HepG2 (cell line): ENCODE measurements at regions of chr12 and their contacts with region 1.

Region 1: GRCh38 chr12:69570545-69571399 is 14.5 kb upstream of the CCT2 start:
- DNase-seq: peak; percentile 54
- ATAC-seq: peak; percentile 70
- H3K4me3 ChIP-seq: no peak overlapping the region
- H3K27ac ChIP-seq: no peak overlapping the region
- H3K4me1 ChIP-seq: no peaks in the 10 kb centered on the region
- H3K27me3 ChIP-seq: no peaks in the 10 kb centered on the region
- CTCF ChIP-seq: peak; percentile 72
- EP300 ChIP-seq: no peak
- POLR2A ChIP-seq: no peak
- RAD21 ChIP-seq: no peak

Region 2: GRCh38 chr12:69290545-69291277 is 280.1 kb before region 1 on chr12:
- CTCF ChIA-PET with region 1: interaction called, 4 read pairs
- POLR2A ChIA-PET with region 1: interaction called, 3 read pairs
- in situ Hi-C with region 1: loop called (anchors 10 kb)
- intact Hi-C with region 1: loop called (anchors 2 kb)
- DNase-seq: peak; percentile 82
- ATAC-seq: peak; percentile 99
- H3K4me3 ChIP-seq: no peak overlapping the region
- H3K27ac ChIP-seq: no peak overlapping the region
- H3K4me1 ChIP-seq: peaks cover 11% of the 10 kb centered on the region
- H3K27me3 ChIP-seq: no peaks in the 10 kb centered on the region; a peak in 1 of 5 replicates
- CTCF ChIP-seq: peak; percentile 97
- EP300 ChIP-seq: no peak
- POLR2A ChIP-seq: no peak
- RAD21 ChIP-seq: peak; percentile 92

Region 3: GRCh38 chr12:69359531-69360347 is 211.0 kb before region 1 on chr12 and contains the start of gene YEATS4:
- CTCF ChIA-PET with region 1: interaction called, 17 read pairs
- POLR2A ChIA-PET with region 1: no interaction called
- in situ Hi-C with region 1: no loop called
- intact Hi-C with region 1: loop called (anchors 1 kb)
- DNase-seq: peak; percentile 95
- ATAC-seq: peak; percentile 90
- H3K4me3 ChIP-seq: peak within 1 kb of the TSS; percentile 71 to 75 (median 72)
- H3K27ac ChIP-seq: peak within 1 kb of the TSS; percentile 94
- H3K4me1 ChIP-seq: peaks cover 44% of the 10 kb centered on the region
- H3K27me3 ChIP-seq: no peaks in the 10 kb centered on the region
- CTCF ChIP-seq: no peak
- EP300 ChIP-seq: 0 out of 4 replicates have a peak, but pooled peaks of 1 of the 2 experiments have one; percentile 8
- POLR2A ChIP-seq: peak; percentile 76 to 86
- RAD21 ChIP-seq: peak; percentile 39; the same call in 1 of the 2 replicates
- total RNA-seq, gene YEATS4: 45.0 and 51.7 TPM in 2 replicates

Region 4: DNA sequence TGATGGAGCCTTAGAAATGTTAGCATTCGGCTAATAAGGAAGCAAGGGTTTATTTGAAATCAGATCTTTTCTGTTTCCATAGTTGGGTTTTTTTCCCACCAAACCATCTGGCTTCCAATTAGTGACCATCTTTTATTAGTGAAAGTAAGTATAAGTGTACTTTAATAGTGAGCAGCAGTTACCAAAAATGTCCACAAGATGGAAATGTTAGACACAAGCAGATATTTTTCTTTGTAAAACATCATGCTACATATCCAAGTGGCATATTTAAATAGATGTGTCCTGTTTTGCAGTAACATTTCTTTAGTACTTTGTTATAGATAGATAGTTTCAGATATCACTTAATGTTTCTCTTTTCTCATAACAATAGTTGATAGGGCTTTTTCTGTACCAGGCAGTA is 182.4 kb before region 1 on chr12:
- CTCF ChIA-PET with region 1: interaction called, 27 read pairs
- POLR2A ChIA-PET with region 1: no interaction called
- in situ Hi-C with region 1: loop called (anchors 10 kb)
- intact Hi-C with region 1: loop called (anchors 1 kb)
- DNase-seq: peak; percentile 43
- ATAC-seq: peak; percentile 48; the same call in 2 of the 3 replicates
- H3K4me3 ChIP-seq: no peak overlapping the region
- H3K27ac ChIP-seq: no peak overlapping the region
- H3K4me1 ChIP-seq: no peaks in the 10 kb centered on the region
- H3K27me3 ChIP-seq: no peaks in the 10 kb centered on the region
- CTCF ChIP-seq: peak; percentile 58
- EP300 ChIP-seq: no peak
- POLR2A ChIP-seq: no peak
- RAD21 ChIP-seq: 0 out of 2 replicates have a peak, but pooled peaks have one; percentile 27

Region 5: DNA sequence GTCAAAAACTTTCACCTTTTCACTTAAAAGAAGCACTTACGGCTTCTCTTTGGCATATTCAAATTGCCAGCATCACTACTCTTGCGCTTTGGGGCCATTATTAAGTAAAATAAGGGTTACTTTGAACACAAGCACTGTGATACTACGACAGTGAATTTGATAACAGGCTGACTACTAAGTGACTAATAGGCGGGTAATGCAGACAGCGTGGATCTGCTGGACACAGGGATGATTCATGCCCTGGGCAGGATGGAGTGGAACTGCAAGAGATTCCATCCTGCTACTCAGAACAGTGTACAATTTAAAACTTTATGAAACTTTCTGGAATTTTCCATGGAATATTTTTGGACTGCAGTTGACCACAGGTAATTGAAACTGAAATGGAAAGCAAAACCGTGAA is 165.3 kb before region 1 on chr12:
- CTCF ChIA-PET with region 1: no interaction called
- POLR2A ChIA-PET with region 1: no interaction called
- in situ Hi-C with region 1: no loop called
- intact Hi-C with region 1: no loop called
- DNase-seq: peak; percentile 47
- ATAC-seq: peak; percentile 49; the same call in 1 of the 3 replicates
- H3K4me3 ChIP-seq: no peak overlapping the region
- H3K27ac ChIP-seq: no peak overlapping the region
- H3K4me1 ChIP-seq: peaks cover 7% of the 10 kb centered on the region; the same call in 1 of the 2 replicates
- H3K27me3 ChIP-seq: no peaks in the 10 kb centered on the region
- CTCF ChIP-seq: no peak
- EP300 ChIP-seq: no peak
- POLR2A ChIP-seq: no peak
- RAD21 ChIP-seq: no peak

Region 6: DNA sequence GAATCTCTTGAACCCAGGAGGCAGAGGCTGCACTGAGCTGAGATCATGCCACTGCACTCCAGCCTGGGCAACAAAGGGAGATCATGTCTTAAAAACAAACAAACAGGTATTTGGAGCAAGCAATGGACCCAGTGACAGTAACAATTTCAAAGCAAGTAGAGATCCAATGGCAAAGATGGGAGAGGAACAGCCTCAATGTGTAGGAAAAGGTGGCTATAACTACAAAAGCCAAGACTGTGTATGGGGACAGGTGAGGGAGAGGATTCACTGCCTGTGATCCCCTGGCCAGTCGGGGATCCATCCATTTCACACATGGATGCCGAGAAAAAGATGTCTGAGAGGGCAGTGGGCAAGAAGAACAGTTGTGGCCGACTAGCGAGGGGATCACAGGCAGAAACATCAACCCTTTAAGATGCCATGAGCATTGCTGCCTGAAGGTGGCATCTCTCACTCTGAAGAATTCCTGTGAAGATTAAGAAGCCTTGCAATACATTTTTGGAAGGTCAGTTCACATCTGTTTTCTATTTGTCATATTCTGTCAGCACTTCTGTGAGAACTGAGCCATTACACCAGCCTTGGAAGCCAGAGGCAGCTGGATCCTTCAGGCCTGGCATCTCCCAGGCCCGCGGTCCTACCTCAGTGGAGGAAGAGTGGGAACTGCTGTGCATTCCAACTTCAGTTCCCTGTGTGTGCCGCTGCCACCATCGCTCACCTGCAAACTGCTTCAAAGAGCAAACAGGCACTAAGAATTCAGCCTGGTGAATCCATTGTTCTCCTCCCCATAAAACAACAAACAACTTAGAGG is 155.1 kb before region 1 on chr12:
- CTCF ChIA-PET with region 1: interaction called, 13 read pairs
- POLR2A ChIA-PET with region 1: interaction called, 4 read pairs
- in situ Hi-C with region 1: no loop called
- intact Hi-C with region 1: loop called (anchors 2 kb)
- DNase-seq: peak; percentile 68
- ATAC-seq: peak; percentile 81
- H3K4me3 ChIP-seq: peak overlapping the region; percentile 43 to 69 (median 48)
- H3K27ac ChIP-seq: peak overlapping the region; percentile 67
- H3K4me1 ChIP-seq: peaks cover 60% of the 10 kb centered on the region
- H3K27me3 ChIP-seq: no peaks in the 10 kb centered on the region
- CTCF ChIP-seq: peak; percentile 73
- EP300 ChIP-seq: no peak
- POLR2A ChIP-seq: 0 out of 4 replicates have a peak, but pooled peaks of 1 of the 2 experiments have one; percentile 10
- RAD21 ChIP-seq: peak; percentile 63

Region 7: DNA sequence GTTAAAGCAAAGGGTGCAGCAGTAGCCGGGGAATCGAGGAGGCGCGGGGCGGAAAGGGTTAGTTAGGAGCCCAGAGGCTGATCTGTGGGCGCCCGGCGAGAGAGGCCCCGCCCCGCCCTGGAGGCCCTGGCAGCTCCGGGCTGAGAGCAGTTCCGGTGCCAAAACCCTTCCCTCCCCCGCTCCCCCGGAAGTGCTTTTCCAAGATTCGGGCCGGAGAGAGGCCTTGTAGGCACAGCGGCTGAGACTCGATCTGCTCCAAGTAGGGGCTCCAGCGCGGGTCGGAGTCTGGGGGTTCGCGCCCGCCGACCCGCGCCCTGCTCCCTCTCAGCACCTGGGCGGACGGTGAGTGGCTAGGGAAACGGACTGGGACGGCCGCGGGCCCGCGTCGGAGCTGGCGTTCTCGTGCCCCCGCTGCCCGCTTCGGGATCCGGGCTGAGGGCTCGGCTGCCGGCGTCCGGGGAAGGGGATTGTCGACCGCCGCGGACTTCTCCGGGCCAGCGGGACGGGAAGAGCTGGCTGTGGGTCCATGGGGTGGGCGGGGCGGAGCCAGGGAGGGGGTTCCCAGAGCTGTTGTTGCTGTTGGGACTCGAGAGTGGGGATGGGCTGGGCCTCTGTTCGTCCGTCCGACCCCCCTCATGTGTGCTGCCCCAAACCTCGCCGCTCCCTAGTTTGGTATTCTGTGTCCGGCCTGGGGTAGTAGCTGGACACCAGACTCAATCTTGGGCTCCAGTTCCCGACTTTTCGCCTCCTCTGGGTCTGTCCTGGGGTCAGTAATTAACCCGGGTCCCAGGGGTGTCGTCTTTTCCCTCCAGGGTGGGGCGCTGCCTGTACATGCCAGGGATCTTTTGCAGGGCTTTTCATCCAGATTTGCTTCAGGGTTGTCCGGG is 100.3 kb before region 1 on chr12 and contains the start of gene FRS2:
- CTCF ChIA-PET with region 1: interaction called, 8 read pairs
- POLR2A ChIA-PET with region 1: no interaction called
- in situ Hi-C with region 1: loop called (anchors 5 kb)
- intact Hi-C with region 1: loop called (anchors 2 kb)
- DNase-seq: peak; percentile 86
- ATAC-seq: peak; percentile 98
- H3K4me3 ChIP-seq: peak within 1 kb of the TSS; percentile 89 to 98 (median 96)
- H3K27ac ChIP-seq: peak within 1 kb of the TSS; percentile 95
- H3K4me1 ChIP-seq: peaks cover 63% of the 10 kb centered on the region
- H3K27me3 ChIP-seq: no peaks in the 10 kb centered on the region; a peak in 1 of 5 replicates
- CTCF ChIP-seq: peak; percentile 77
- EP300 ChIP-seq: 0 out of 4 replicates have a peak, but pooled peaks of 1 of the 2 experiments have one; percentile 16
- POLR2A ChIP-seq: peak; percentile 82 to 83
- RAD21 ChIP-seq: peak; percentile 64
- total RNA-seq, gene FRS2: 16.8 and 31.4 TPM in 2 replicates

Region 8: DNA sequence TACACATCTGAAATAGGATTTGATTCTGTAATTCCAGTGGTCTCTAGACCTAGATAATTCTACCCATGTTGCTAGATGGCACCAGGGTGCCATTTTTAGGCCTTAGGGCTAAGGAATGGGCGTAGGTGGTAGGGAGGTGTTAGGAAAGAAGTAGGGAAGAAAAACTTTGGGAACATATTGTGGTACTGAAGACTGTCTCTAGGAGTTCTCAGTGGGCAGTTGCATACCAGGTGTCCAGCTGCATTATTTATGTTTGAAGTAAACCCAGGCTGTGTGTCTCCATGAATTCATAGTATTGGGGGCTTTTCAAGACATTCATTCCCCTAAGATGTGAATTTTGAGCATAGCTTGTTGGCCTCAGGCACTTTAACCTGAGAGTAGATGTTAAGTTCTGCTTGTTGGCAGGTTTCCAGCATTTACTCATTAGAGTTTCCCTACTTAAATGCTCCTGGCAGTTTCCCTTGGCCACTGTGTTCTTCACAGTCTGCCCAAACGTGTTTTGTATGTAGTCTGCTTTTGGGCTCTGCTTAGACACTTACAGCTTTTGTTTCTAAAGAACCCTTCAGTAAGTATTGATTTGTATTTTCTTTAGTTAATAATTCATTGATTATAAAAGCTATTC is 17.0 kb before region 1 on chr12:
- CTCF ChIA-PET with region 1: no interaction called
- POLR2A ChIA-PET with region 1: no interaction called
- in situ Hi-C with region 1: no loop called
- intact Hi-C with region 1: no loop called
- DNase-seq: peak; percentile 11
- ATAC-seq: peak; percentile 49; the same call in 2 of the 3 replicates
- H3K4me3 ChIP-seq: no peak overlapping the region
- H3K27ac ChIP-seq: peak overlapping the region; percentile 7
- H3K4me1 ChIP-seq: peaks cover 46% of the 10 kb centered on the region
- H3K27me3 ChIP-seq: no peaks in the 10 kb centered on the region
- CTCF ChIP-seq: no peak
- EP300 ChIP-seq: no peak
- POLR2A ChIP-seq: no peak
- RAD21 ChIP-seq: no peak

Region 9: DNA sequence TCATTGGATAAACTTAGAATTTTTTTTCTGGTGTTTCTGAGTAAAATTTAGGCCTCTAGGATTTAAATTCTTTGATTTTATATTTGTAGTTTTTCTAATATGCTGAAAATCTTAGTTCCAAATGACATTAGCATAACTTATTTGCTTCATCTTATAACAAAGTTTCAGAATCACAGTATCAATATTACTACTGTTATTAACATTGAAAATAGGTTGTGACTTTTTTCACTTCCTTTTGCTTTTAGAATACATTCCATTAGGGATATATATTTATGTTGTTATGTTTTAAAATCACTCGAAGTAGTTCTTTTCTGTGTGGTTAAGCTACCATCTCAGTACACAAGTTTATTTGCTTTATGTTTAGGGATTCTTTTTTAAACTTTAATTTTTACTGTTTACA is 180.7 kb after region 1 on chr12:
- CTCF ChIA-PET with region 1: no interaction called
- POLR2A ChIA-PET with region 1: no interaction called
- in situ Hi-C with region 1: no loop called
- intact Hi-C with region 1: no loop called
- DNase-seq: no peak
- ATAC-seq: no peak
- H3K4me3 ChIP-seq: no peak overlapping the region
- H3K27ac ChIP-seq: no peak overlapping the region
- H3K4me1 ChIP-seq: no peaks in the 10 kb centered on the region
- H3K27me3 ChIP-seq: no peaks in the 10 kb centered on the region
- CTCF ChIP-seq: no peak
- EP300 ChIP-seq: no peak
- POLR2A ChIP-seq: no peak
- RAD21 ChIP-seq: no peak